Right lobe of liver (tissue), 6 donors: ENCODE measurements at regions of chr15 and their contacts with region 1.

Region 1: GRCh38 chr15:89358755-89359439 is 24.3 kb upstream of the POLG start:
- DNase-seq: peak; percentile 77 to 87 (median 78)
- ATAC-seq: peak; percentile 89 to 95 (median 92)
- H3K4me3 ChIP-seq: peak overlapping the region; percentile 34 to 51 (median 34)
- H3K27ac ChIP-seq: no peak overlapping the region
- H3K4me1 ChIP-seq: peaks cover 0 to 5% (median 0%) of the 10 kb centered on the region in 4 donors
- H3K27me3 ChIP-seq: peaks cover 9 to 43% of the 10 kb centered on the region in 2 donors
- CTCF ChIP-seq: peak; percentile 95 to 98 (median 96)
- POLR2A ChIP-seq: no peak

Region 2: GRCh38 chr15:89429023-89429422 is 70.1 kb after region 1 on chr15:
- intact Hi-C with region 1: loop called (anchors 5 kb)
- DNase-seq: no peak
- ATAC-seq: no peak
- H3K4me3 ChIP-seq: no peak overlapping the region
- H3K27ac ChIP-seq: no peak overlapping the region
- H3K4me1 ChIP-seq: no peaks in the 10 kb centered on the region
- H3K27me3 ChIP-seq: no peaks in the 10 kb centered on the region
- CTCF ChIP-seq: no peak
- POLR2A ChIP-seq: no peak